Cardiac septum (tissue), 1 donor: ENCODE measurements at regions of chr14 and their contacts with region 1.

Region 1: DNA sequence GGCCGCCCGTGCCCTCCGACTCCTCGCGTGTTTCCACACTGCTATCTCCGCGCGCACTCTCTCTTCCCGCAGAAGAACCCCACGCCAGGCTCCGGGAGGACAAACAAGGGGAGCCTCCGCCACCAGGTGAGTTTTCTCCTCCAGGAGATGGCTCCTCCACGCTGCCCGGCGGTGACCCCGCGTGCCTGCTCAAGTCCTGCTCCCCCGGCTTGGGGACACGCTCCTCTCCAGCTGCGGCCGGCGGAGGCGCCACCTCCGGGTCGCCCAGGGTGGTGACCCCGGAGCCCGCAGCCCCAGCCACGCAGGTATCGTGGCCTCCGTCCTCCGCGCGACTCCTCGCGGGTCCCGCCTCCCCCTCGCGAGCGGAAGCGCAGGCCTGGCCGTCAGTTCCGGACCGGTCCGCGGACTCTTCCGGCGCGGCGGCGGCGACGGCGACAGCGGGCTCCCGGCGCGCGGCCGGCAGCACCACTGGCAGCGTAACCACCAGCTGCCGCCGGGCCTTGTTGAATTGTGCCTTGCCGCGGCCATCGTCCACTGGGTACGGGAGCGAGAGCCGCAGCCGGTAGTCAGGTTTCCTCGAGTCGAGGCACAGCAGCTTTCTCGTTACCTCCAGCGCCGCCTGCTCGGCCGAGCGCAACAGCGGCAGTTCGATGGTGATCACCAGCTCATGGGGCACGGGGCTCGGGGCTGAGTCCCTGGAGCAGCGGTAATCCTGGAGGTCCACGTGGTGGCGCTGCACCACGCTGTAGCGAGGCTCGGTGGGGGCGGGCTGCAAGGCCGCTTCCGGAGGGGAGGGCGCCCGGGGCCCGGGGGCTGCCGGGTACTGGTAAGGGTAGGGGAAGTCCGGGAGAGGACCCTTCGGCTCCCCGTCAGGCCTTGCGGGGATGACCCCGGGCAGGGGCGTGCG is 1.2 kb downstream of the DNAAF2 start:
- DNase-seq: peak; percentile 95

Region 2: GRCh38 chr14:49620182-49621113 is 13.4 kb before region 1 on chr14 and contains the starts of genes MGAT2 and RPL36AL:
- intact Hi-C with region 1: loop called (anchors 2 kb)
- DNase-seq: peak; percentile 99
- total RNA-seq, gene MGAT2: 20.0 TPM
- total RNA-seq, gene RPL36AL: 135 TPM

Region 3: DNA sequence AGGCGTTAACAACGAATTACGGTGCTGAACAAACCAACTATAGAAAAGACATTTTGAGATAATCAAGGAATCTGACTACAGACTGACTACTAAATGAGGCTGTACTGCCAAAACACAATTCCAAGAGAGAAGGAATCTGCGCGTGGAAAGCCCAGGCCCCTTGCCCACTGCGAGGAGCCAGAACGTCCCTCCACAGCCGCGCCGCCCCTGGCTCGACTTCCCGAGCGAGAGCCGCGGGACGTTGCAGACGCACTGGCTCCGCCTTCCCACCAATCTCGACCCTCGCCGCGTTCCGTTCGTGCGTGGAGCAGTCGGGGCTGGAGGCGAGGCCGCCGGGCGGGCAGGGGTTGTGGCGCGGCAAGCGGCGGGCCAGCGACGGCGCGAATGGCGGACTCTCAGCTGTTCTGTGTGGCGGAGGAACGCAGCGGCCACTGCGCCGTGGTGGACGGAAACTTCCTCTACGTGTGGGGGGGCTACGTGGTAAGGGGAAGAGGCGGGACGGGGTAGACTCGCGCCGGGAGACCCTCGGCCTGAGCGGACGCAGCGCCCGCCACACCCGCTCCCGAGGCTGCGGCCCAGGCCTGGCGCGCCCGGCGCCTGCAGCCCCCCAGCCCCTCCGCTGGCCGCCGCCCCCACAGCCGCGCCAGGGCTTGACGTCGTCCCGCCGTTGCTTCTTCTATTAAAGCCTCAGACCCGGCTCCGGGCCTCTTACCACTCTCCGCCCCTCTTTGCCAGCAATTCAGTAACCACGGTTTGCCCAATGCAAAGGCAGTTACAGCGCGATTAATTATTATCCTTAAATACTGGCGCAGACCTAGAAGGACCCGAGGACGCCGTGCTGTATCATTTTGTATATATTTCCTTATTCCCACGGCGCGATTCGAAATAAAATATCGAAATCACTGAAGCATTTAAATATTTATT is 59.2 kb after region 1 on chr14 and contains the start of gene KLHDC1:
- intact Hi-C with region 1: loop called (anchors 5 kb)
- DNase-seq: peak; percentile 94
- total RNA-seq, gene KLHDC1: 6.6 TPM

Region 4: DNA sequence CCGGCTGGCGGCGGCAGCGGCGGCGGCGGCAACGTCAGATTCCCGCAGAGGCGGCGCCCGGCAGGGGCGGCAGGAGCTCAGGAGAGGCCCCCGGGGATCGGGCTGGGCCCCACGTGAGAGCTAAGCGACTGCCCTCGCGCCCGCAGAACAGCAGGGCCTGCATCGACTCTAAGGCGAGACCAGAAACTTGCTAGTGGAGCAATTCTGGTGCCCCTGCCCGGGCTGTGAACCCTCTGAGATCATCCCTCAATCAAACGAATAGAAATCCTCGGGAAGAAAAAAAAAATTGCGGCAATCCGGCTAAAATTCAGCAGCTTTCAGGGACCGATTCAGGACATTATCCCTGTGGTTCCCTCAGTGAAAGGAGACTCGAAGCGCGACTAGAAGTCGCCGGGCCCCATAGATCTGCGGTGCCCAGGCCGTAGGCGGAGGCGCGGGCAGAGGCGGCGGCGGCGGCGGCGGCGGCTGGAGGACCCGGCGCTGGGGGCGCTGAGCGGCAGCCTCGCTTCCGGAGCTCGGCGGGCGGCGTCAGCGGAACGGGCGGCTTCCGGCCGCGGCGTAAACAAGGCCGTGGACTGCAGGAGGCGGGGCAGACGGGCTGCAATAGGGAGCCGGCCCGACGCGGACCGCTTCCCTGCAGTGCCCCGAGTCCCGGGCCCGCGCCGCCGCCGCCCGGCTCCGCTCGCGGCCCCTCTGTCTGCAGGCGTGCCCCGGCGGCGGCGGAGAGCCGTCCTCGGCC is 133.8 kb after region 1 on chr14 and contains the start of gene KLHDC2:
- intact Hi-C with region 1: loop called (anchors 2 kb)
- DNase-seq: peak; percentile 95
- total RNA-seq, gene KLHDC2: 77.2 TPM

Region 5: DNA sequence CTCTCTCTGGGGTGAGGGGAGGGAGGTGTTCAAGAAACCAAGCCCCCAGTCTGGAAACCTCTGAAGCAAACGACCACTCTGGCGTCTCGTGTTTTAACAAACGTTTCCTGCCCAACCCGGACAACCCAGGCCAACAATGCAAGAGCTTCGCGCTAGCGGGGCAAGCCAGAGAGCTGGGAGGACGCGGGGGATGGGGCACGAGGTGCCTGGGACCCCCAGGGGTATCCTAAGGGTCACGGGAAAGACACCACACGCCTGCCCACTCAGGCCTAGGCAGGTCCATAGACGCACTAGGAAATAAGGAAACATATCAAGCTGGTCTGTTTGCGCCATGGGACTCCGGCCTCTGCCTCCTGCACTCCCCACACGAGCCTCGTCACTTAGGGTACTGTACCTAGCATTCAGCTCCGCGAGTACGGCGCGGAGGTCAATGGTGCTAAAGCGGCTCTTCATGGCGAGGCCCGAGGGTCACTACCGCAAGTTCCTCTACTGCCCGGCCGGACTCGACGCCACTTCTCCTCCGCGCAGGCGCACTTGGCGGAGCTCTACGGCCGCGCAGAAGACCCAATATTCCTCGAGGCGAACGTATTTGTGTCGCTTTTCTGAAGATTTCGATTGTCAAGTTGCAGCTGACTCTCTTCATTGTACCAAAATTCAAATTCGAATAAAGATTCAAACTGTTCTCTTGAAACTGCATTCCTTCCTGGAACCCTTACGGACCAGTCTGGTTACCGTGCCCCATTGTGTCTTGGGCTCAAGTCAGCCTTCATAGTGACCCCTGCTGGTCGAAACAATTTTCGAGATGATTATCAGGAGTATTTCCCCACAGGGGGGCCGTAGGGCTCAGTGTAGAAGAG is 218.6 kb after region 1 on chr14 and contains the start of gene NEMF:
- intact Hi-C with region 1: loop called (anchors 10 kb)
- DNase-seq: peak; percentile 95
- total RNA-seq, gene NEMF: 54.0 TPM

Region 6: DNA sequence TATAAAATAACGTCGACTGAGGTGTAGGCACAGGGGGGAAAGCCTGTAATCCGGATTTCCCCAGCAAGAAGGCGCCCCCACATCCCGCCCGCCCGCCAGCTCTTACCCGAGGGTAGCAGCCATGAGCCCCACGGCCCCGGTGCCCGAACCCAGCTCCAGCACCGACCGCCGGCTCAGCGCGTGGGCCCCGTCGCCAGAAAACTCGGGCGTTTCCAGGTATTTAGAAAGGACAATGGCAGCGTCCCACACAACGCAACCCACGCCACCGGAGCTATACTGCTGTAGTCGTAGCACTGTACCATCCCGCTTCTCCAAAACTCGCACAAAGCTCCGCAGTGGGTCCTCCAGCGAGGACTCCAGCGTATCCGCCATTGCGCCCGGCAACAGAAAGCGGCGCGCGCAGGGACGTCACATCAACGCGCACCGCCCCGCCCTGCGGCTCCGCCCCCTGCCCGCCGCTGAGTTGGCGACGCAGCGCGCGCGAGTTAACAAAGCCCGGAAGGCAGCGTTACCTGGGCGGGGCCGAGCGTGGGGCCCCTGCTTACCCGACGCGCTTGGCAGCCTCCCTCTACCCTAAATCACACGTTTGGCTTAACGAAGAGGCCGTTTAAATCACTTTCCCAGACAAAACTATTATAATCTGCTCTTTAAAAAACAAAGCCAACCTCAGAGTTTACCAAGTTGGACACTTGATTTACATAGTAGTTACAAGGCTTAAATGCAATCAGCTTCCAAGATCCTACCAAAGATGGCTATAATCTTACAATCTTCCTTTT is 482.5 kb after region 1 on chr14 and contains the start of gene VCPKMT:
- intact Hi-C with region 1: no loop called
- DNase-seq: peak; percentile 97
- total RNA-seq, gene VCPKMT: 3.0 TPM